ENCODE measurements at regions of chr22 and their contacts with region 1.

Region 1: GRCh38 chr22:22848364-22848866 is 39.2 kb upstream of the IGLL5 start:
- DNase-seq: peak; percentile 39 to 85 (median 72)
- ATAC-seq: peak; percentile 83
- H3K4me3 ChIP-seq: no peak overlapping the region
- H3K4me3 Mint-ChIP-seq: no peak overlapping the region
- H3K27ac ChIP-seq: no peak overlapping the region
- H3K27ac Mint-ChIP-seq: no peak overlapping the region
- H3K4me1 ChIP-seq: peaks cover 16% of the 10 kb centered on the region
- H3K4me1 Mint-ChIP-seq: peaks cover 46% of the 10 kb centered on the region
- H3K27me3 ChIP-seq: no peaks in the 10 kb centered on the region
- H3K27me3 Mint-ChIP-seq: no peaks in the 10 kb centered on the region
- CTCF ChIP-seq: peak; percentile 80

Region 2: DNA sequence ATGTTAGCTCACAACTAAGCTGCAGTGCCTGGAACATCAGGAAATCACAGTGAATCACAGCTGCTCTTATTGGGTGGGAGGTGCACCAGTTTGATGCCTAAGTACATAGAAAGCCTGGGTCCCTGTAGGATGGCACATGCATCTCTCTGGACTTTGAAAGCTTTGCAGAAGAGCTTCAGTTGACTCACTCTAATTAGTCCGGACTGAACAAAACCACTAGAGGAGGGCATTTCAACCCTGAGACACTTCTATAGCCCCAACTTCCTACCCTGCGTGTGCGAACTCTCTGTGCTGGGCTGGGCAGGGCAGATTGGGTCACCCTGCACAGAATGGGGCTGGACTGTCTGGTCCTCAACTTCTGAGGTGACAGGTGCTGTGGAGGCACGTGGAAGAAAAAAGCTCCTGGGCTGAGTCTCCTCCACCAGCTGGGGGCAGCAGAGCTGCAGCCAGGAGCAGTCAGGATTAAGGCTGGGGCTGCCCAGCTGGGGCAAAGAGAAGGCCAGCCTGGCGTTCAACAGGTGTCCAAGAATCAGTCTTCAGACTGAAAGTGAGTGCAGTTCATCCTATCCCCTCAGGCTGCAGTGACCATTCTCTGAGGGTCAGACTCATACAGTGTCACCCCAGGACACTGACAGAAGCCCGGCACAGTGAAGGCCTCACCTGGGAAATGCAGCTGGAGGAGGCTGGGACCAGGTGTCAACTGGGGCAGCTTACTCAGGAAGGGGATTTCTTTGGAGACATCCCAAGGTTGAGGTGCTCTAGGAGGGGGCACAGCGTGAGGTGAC is 181.9 kb before region 1 on chr22:
- CTCF ChIA-PET with region 1: no interaction called
- POLR2A ChIA-PET with region 1: no interaction called
- intact Hi-C with region 1: no loop called
- DNase-seq: peak in 2 of 9 experiments; percentile 25 to 34
- ATAC-seq: no peak
- H3K4me3 ChIP-seq: no peak overlapping the region
- H3K4me3 Mint-ChIP-seq: no peak overlapping the region
- H3K27ac ChIP-seq: no peak overlapping the region
- H3K27ac Mint-ChIP-seq: no peak overlapping the region
- H3K4me1 ChIP-seq: no peaks in the 10 kb centered on the region
- H3K4me1 Mint-ChIP-seq: no peaks in the 10 kb centered on the region
- H3K27me3 ChIP-seq: no peaks in the 10 kb centered on the region
- H3K27me3 Mint-ChIP-seq: no peaks in the 10 kb centered on the region
- CTCF ChIP-seq: no peak

Region 3: GRCh38 chr22:22748297-22748743 is 100.1 kb before region 1 on chr22:
- CTCF ChIA-PET with region 1: interaction called, 42 read pairs
- POLR2A ChIA-PET with region 1: interaction called, 4 read pairs
- intact Hi-C with region 1: loop called in 1 of 2 experiments (anchors 1 kb)
- DNase-seq: peak in 5 of 9 experiments; percentile 22 to 77 (median 45)
- ATAC-seq: peak; percentile 52
- H3K4me3 ChIP-seq: no peak overlapping the region
- H3K4me3 Mint-ChIP-seq: no peak overlapping the region
- H3K27ac ChIP-seq: no peak overlapping the region
- H3K27ac Mint-ChIP-seq: peak overlapping the region; percentile 32
- H3K4me1 ChIP-seq: peaks cover 12% of the 10 kb centered on the region
- H3K4me1 Mint-ChIP-seq: peaks cover 35% of the 10 kb centered on the region
- H3K27me3 ChIP-seq: no peaks in the 10 kb centered on the region
- H3K27me3 Mint-ChIP-seq: peaks cover 8% of the 10 kb centered on the region
- CTCF ChIP-seq: peak; percentile 69

Region 4: DNA sequence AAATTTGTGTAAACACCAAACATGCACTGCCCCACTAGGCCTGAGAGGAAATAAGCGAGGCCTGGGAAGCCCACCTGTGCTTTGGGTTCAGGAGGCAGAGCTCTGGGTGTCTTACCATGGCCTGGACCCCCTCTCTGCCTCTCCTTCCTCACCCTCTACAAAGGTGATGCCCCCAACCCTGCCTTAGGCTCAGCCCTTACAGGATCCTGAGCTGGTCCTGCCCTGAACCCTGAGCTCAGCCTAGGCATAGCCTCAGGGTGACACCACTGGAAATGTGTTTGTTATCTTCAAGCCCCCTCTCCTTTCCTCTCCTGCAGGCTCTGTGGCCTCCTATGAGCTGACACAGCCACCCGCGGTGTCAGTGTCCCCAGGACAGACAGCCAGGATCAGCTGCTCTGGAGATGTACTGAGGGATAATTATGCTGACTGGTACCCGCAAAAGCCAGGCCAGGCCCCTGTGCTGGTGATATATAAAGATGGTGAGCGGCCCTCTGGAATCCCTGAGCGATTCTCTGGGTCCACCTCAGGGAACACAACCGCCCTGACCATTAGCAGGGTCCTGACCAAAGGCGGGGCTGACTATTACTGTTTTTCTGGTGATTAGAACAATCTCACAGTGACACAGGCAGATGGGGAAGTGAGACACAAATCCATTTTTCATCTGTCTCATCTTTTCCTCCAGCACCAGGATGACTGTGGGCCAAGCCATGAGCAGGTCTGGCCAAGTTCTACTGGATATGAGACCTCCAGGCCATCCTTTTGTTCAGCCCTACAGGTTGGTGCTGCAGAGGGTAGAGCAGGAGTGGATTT is 86.2 kb before region 1 on chr22:
- CTCF ChIA-PET with region 1: interaction called, 12 read pairs
- POLR2A ChIA-PET with region 1: no interaction called
- intact Hi-C with region 1: no loop called
- DNase-seq: no peak
- ATAC-seq: no peak
- H3K4me3 ChIP-seq: peak overlapping the region in 1 of 2 experiments; percentile 58
- H3K4me3 Mint-ChIP-seq: peak overlapping the region; percentile 68
- H3K27ac ChIP-seq: peak overlapping the region in 1 of 2 experiments; percentile 36
- H3K27ac Mint-ChIP-seq: peak overlapping the region; percentile 82
- H3K4me1 ChIP-seq: peaks cover 8% of the 10 kb centered on the region
- H3K4me1 Mint-ChIP-seq: peaks cover 55% of the 10 kb centered on the region
- H3K27me3 ChIP-seq: no peaks in the 10 kb centered on the region
- H3K27me3 Mint-ChIP-seq: no peaks in the 10 kb centered on the region
- CTCF ChIP-seq: no peak

Region 5: GRCh38 chr22:22802339-22802970 is 46.0 kb before region 1 on chr22:
- CTCF ChIA-PET with region 1: interaction called, 248 read pairs
- POLR2A ChIA-PET with region 1: interaction called, 4 read pairs
- intact Hi-C with region 1: loop called (anchors 1 to 2 kb)
- DNase-seq: peak in 8 of 9 experiments; percentile 37 to 77 (median 58)
- ATAC-seq: peak; percentile 86
- H3K4me3 ChIP-seq: no peak overlapping the region
- H3K4me3 Mint-ChIP-seq: no peak overlapping the region
- H3K27ac ChIP-seq: no peak overlapping the region
- H3K27ac Mint-ChIP-seq: peak overlapping the region; percentile 18
- H3K4me1 ChIP-seq: no peaks in the 10 kb centered on the region
- H3K4me1 Mint-ChIP-seq: peaks cover 48% of the 10 kb centered on the region
- H3K27me3 ChIP-seq: no peaks in the 10 kb centered on the region
- H3K27me3 Mint-ChIP-seq: no peaks in the 10 kb centered on the region
- CTCF ChIP-seq: peak; percentile 80

Region 6: DNA sequence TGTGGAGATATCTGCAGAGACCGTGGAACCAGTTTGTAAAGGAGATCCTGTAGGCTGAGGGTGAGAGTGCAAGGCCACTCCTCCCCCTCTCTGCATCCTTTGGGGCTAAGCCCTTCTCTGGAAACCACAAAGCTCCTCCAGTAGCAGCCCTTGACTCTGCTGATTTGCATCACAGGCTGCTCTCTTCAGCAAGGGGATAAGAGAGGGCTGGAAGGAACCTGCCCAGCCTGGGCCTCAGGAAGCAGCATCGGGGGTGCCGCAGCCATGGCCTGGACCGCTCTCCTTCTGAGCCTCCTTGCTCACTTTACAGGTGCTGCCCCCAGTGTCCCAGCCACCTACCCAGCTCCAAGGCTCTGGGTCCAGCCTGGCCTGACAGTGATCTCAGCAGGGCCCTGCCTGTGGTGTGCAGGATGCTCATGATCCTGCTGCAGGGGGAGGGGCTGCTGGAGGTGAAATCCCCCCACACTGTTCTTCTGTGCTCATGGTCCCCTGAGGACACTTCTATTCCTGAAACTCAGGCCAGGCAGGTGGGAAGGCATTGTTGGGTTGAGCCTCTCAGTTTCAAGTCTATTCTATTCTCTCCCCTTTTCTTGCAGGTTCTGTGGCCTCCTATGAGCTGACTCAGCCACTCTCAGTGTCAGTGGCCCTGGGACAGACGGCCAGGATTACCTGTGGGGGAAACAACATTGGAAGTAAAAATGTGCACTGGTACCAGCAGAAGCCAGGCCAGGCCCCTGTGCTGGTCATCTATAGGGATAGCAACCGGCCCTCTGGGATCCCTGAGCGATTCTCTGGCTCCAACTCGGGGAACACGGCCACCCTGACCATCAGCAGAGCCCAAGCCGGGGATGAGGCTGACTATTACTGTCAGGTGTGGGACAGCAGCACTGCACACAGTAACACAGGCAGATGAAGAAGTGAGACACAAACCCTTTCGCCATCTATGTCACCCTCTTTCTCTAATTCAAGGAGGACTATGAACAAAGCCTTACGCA is 29.3 kb before region 1 on chr22:
- CTCF ChIA-PET with region 1: interaction called, 248 read pairs
- POLR2A ChIA-PET with region 1: interaction called, 8 read pairs
- intact Hi-C with region 1: loop called in 1 of 2 experiments (anchors 2 kb)
- DNase-seq: peak in 8 of 9 experiments; percentile 23 to 83 (median 56)
- ATAC-seq: peak; percentile 42
- H3K4me3 ChIP-seq: peak overlapping the region; percentile 50 to 51
- H3K4me3 Mint-ChIP-seq: peak overlapping the region; percentile 75
- H3K27ac ChIP-seq: peak overlapping the region; percentile 48 to 80
- H3K27ac Mint-ChIP-seq: peak overlapping the region; percentile 93
- H3K4me1 ChIP-seq: peaks cover 94% of the 10 kb centered on the region
- H3K4me1 Mint-ChIP-seq: peaks cover 98% of the 10 kb centered on the region
- H3K27me3 ChIP-seq: no peaks in the 10 kb centered on the region
- H3K27me3 Mint-ChIP-seq: no peaks in the 10 kb centered on the region
- CTCF ChIP-seq: no peak

Region 7: GRCh38 chr22:22865311-22866072 is 17.1 kb after region 1 on chr22:
- CTCF ChIA-PET with region 1: interaction called, 16 read pairs
- POLR2A ChIA-PET with region 1: no interaction called
- intact Hi-C with region 1: no loop called
- DNase-seq: peak in 7 of 9 experiments; percentile 11 to 60 (median 34)
- ATAC-seq: peak; percentile 73
- H3K4me3 ChIP-seq: no peak overlapping the region
- H3K4me3 Mint-ChIP-seq: no peak overlapping the region
- H3K27ac ChIP-seq: peak overlapping the region in 1 of 2 experiments; percentile 17
- H3K27ac Mint-ChIP-seq: peak overlapping the region; percentile 55
- H3K4me1 ChIP-seq: peaks cover 30% of the 10 kb centered on the region
- H3K4me1 Mint-ChIP-seq: peaks cover 44% of the 10 kb centered on the region
- H3K27me3 ChIP-seq: no peaks in the 10 kb centered on the region
- H3K27me3 Mint-ChIP-seq: no peaks in the 10 kb centered on the region
- CTCF ChIP-seq: no peak

Region 8: DNA sequence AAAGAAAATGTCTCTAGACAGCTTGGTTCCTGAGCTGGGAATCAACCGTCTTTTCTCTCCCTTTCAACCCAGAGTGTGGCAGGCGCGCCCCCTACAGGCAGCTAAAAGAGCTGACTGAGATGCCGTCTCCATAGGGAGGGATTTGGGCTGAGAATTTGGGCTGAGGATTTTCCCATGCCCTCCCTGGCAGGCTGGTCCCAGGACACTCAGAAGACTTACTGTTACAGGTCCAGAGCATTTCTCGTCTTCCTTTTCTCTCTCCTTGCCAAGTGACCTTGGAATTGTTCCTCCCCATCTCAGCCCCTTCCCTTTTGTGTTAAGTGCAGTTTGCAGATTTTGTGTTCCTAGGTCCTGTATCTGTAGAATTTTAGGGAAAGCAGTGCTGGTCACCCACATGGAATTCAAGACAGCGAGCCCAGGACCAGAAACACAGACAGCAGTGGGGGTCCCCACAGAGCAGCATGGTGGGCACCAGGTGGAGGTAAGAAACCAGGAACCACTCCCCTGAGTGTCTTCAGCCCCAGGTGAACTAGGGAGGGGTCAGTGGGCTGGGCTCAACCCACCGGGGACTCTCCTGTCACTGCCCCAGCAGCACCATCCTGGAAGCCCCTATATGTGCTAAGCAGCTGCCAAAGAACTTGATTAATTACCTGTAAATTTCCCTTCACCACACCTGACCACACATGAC is 29.3 kb after region 1 on chr22:
- CTCF ChIA-PET with region 1: interaction called, 32 read pairs
- POLR2A ChIA-PET with region 1: interaction called, 3 read pairs
- intact Hi-C with region 1: loop called (anchors 1 to 2 kb)
- DNase-seq: peak; percentile 56 to 91 (median 81)
- ATAC-seq: peak; percentile 59
- H3K4me3 ChIP-seq: no peak overlapping the region
- H3K4me3 Mint-ChIP-seq: no peak overlapping the region
- H3K27ac ChIP-seq: no peak overlapping the region
- H3K27ac Mint-ChIP-seq: peak overlapping the region; percentile 41
- H3K4me1 ChIP-seq: no peaks in the 10 kb centered on the region
- H3K4me1 Mint-ChIP-seq: peaks cover 7% of the 10 kb centered on the region
- H3K27me3 ChIP-seq: no peaks in the 10 kb centered on the region
- H3K27me3 Mint-ChIP-seq: no peaks in the 10 kb centered on the region
- CTCF ChIP-seq: peak; percentile 78